HCT116 (cell line): ENCODE measurements at regions of chr1 and their contacts with region 1.

Region 1: DNA sequence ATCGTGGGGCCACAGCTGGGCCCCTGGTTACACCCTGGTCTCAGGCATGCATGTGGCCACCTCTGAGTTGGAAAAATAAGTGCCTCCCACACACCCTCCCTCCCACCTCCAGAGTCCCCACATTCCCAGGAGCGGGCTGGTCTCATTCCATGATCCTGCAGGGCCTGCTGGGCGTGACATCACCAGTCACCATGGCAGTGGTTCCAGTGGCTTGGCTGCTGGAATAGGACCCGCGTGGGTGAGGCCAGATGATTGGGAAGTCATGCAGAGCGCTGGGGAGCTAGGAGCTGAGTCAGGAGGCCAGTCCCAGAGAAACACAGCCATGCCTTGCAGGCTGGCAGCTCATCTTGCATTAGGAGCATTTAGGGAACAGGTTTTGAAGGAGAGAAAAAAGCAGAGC is 125.4 kb upstream of the TMEM51 start:
- DNase-seq: no peak
- ATAC-seq: peak; percentile 34; the same call in 1 of the 2 replicates
- H3K4me3 ChIP-seq: no peak overlapping the region
- H3K27ac ChIP-seq: no peak overlapping the region
- H3K4me1 ChIP-seq: peaks cover 6 to 23% of the 10 kb centered on the region in 2 experiments; a peak in 3 of 4 replicates
- H3K27me3 ChIP-seq: no peaks in the 10 kb centered on the region
- CTCF ChIP-seq: no peak
- POLR2A ChIP-seq: no peak
- RAD21 ChIP-seq: no peak

Region 2: DNA sequence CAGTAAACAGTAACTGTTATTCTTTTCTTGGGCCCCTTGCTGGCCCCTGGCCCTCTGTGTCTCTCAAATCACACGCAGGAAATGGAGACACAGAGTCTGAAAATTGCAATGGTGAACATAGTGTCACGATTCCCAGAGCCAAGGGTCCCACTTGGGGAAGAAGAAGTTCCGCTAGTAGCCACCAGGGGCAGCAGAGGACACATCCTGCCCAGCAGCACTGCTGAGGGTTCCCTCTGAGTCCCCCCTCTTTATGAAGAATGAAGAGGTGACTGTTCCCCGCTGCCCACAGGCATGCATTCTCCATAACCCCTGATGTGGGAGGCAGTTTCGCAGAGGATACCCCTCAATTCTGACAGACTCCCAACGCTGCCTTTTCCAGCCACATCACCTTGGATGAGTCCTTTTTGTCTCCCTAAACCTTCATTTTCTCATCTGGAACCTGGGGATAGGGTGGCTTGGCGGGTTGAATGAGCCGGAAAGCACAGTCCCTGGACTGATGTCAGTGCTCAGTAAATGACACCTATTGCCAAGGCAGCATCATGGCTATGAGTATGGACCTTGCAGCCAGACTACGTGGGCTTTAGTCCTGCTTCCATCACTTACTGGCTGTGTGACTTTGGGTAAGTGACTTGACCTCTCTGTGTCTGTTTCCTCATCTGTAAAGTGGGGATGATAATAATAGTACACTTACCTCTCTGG is 112.6 kb before region 1 on chr1:
- CTCF ChIA-PET with region 1: no interaction called
- POLR2A ChIA-PET with region 1: no interaction called
- RAD21 ChIA-PET with region 1: no interaction called
- intact Hi-C with region 1: loop called (anchors 2 kb)
- DNase-seq: peak; percentile 28
- ATAC-seq: peak; percentile 95
- H3K4me3 ChIP-seq: no peak overlapping the region
- H3K27ac ChIP-seq: no peak overlapping the region
- H3K4me1 ChIP-seq: peaks cover 5 to 10% of the 10 kb centered on the region in 2 experiments; a peak in 2 of 4 replicates
- H3K27me3 ChIP-seq: no peaks in the 10 kb centered on the region
- CTCF ChIP-seq: peak; percentile 30 to 92 (median 88); a peak in 5 of 6 replicates
- POLR2A ChIP-seq: no peak
- RAD21 ChIP-seq: peak; percentile 53